ENCODE measurements at regions of chr6 and their contacts with region 1.

Region 1: GRCh38 chr6:161168281-161168891 is 105.5 kb downstream of the AGPAT4 start:
- DNase-seq: peak; percentile 99
- H3K4me3 Mint-ChIP-seq: no peak overlapping the region
- H3K27ac Mint-ChIP-seq: peak overlapping the region; percentile 74
- H3K4me1 Mint-ChIP-seq: peaks cover 30% of the 10 kb centered on the region
- H3K27me3 Mint-ChIP-seq: no peaks in the 10 kb centered on the region
- CTCF ChIP-seq: no peak

Region 2: DNA sequence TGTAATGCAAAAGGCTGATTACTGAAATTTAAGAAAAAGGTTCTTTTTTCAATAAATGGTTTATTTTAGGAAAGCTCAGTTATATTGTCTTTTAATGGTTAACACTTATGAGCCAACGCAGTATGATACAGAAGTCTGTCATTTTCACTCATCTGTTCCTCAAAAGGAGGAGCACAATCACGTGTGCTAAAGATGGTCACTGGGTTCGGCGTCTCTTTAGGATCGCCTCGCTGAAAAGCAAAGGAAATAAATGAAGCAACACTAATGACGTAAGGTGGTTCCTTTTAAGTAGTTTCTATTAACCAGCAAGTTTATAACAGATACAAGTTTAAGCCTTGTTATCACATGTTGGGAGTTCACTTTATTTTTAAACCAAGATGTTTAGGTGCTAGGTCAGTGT is 51.1 kb before region 1 on chr6:
- CTCF ChIA-PET with region 1: no interaction called
- POLR2A ChIA-PET with region 1: no interaction called
- intact Hi-C with region 1: no loop called
- DNase-seq: no peak
- H3K4me3 Mint-ChIP-seq: no peak overlapping the region
- H3K27ac Mint-ChIP-seq: no peak overlapping the region
- H3K4me1 Mint-ChIP-seq: no peaks in the 10 kb centered on the region
- H3K27me3 Mint-ChIP-seq: no peaks in the 10 kb centered on the region
- CTCF ChIP-seq: no peak

Region 3: GRCh38 chr6:161273752-161274487 is 105.5 kb after region 1 on chr6 and contains the start of gene AGPAT4:
- CTCF ChIA-PET with region 1: no interaction called
- POLR2A ChIA-PET with region 1: interaction called, 3 read pairs
- intact Hi-C with region 1: loop called (anchors 2 kb)
- DNase-seq: peak; percentile 97
- H3K4me3 Mint-ChIP-seq: peak within 1 kb of the TSS; percentile 80
- H3K27ac Mint-ChIP-seq: peak within 1 kb of the TSS; percentile 98
- H3K4me1 Mint-ChIP-seq: peaks cover 15% of the 10 kb centered on the region
- H3K27me3 Mint-ChIP-seq: no peaks in the 10 kb centered on the region
- CTCF ChIP-seq: no peak
- total RNA-seq, gene AGPAT4: 5.6 and 7.3 TPM in 2 replicates